Natural killer cell (primary cell): ENCODE measurements at regions of chr14 and their contacts with region 1.

Region 1: GRCh38 chr14:93219103-93219726 is 12.2 kb downstream of the UBR7 start:
- DNase-seq: peak in 1 of 2 donors; percentile 78
- ATAC-seq: peak; percentile 71 to 78 (median 77)
- H3K4me3 ChIP-seq: no peak overlapping the region
- H3K4me3 Mint-ChIP-seq: no peak overlapping the region
- H3K27ac ChIP-seq: no peak overlapping the region
- H3K27ac Mint-ChIP-seq: no peak overlapping the region
- H3K4me1 ChIP-seq: no peaks in the 10 kb centered on the region
- H3K4me1 Mint-ChIP-seq: no peaks in the 10 kb centered on the region
- H3K27me3 ChIP-seq: no peaks in the 10 kb centered on the region
- H3K27me3 Mint-ChIP-seq: no peaks in the 10 kb centered on the region
- CTCF ChIP-seq: peak; percentile 51

Region 2: GRCh38 chr14:92951912-92952471 is 267.2 kb before region 1 on chr14:
- intact Hi-C with region 1: loop called (anchors 2 kb)
- DNase-seq: peak; percentile 80 to 88
- ATAC-seq: peak; percentile 90 to 99 (median 97)
- H3K4me3 ChIP-seq: no peak overlapping the region
- H3K4me3 Mint-ChIP-seq: no peak overlapping the region
- H3K27ac ChIP-seq: no peak overlapping the region
- H3K27ac Mint-ChIP-seq: peak overlapping the region in 1 of 2 donors; percentile 31
- H3K4me1 ChIP-seq: peaks cover 8% of the 10 kb centered on the region
- H3K4me1 Mint-ChIP-seq: peaks cover 6 to 8% of the 10 kb centered on the region in 2 donors
- H3K27me3 ChIP-seq: no peaks in the 10 kb centered on the region
- H3K27me3 Mint-ChIP-seq: no peaks in the 10 kb centered on the region
- CTCF ChIP-seq: peak; percentile 92

Region 3: GRCh38 chr14:93206793-93207467 is 12.3 kb before region 1 on chr14 and contains the starts of genes GON7 and UBR7:
- intact Hi-C with region 1: no loop called
- DNase-seq: peak; percentile 79 to 95
- ATAC-seq: peak; percentile 95 to 98 (median 96)
- H3K4me3 ChIP-seq: peak within 1 kb of the TSS; percentile 86
- H3K4me3 Mint-ChIP-seq: peak within 1 kb of the TSS; percentile 96
- H3K27ac ChIP-seq: peak within 1 kb of the TSS; percentile 69
- H3K27ac Mint-ChIP-seq: peak within 1 kb of the TSS; percentile 92 to 93
- H3K4me1 ChIP-seq: peaks cover 20% of the 10 kb centered on the region
- H3K4me1 Mint-ChIP-seq: peaks cover 27 to 43% of the 10 kb centered on the region in 2 donors
- H3K27me3 ChIP-seq: no peaks in the 10 kb centered on the region
- H3K27me3 Mint-ChIP-seq: no peaks in the 10 kb centered on the region
- CTCF ChIP-seq: peak; percentile 11
- total RNA-seq, gene GON7: 3.2 to 6.6 (median 5.2) TPM
- total RNA-seq, gene UBR7: 17.0 to 23.4 (median 18.6) TPM

Region 4: DNA sequence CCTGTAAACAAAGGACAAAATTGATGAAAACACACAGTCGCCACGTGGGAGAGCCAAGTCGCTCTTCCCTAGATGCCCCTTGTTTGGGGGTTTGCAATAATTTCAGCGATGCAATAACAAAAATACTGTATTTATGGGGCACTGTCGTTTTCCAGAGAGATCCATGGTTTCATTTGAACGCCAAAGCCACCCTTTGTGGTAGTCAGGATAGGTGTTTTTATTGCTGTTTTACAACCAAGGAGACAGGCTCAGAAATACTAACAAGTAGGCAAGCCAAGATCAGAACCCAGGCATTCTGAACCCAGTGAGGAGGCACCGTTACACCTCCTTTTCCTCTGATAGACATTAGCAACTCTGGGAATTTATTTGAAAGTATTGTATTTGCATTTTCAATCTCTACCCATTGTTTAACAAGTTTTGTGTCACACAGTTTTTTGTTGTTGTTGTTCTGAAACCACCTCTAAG is 114.4 kb after region 1 on chr14:
- intact Hi-C with region 1: no loop called
- DNase-seq: no peak
- ATAC-seq: no peak
- H3K4me3 ChIP-seq: peak overlapping the region; percentile 83
- H3K4me3 Mint-ChIP-seq: peak overlapping the region; percentile 93
- H3K27ac ChIP-seq: peak overlapping the region; percentile 83
- H3K27ac Mint-ChIP-seq: peak overlapping the region; percentile 87 to 96
- H3K4me1 ChIP-seq: peaks cover 14% of the 10 kb centered on the region
- H3K4me1 Mint-ChIP-seq: peaks cover 42% of the 10 kb centered on the region in 2 donors
- H3K27me3 ChIP-seq: no peaks in the 10 kb centered on the region
- H3K27me3 Mint-ChIP-seq: no peaks in the 10 kb centered on the region
- CTCF ChIP-seq: no peak